Left cardiac atrium (tissue), 4 donors: ENCODE measurements at regions of chr12 and their contacts with region 1.

Region 1: GRCh38 chr12:119444456-119445044 is 110.0 kb downstream of the CCDC60 start:
- DNase-seq: peak; percentile 46
- ATAC-seq: peak in 1 of 2 donors; percentile 33

Region 2: DNA sequence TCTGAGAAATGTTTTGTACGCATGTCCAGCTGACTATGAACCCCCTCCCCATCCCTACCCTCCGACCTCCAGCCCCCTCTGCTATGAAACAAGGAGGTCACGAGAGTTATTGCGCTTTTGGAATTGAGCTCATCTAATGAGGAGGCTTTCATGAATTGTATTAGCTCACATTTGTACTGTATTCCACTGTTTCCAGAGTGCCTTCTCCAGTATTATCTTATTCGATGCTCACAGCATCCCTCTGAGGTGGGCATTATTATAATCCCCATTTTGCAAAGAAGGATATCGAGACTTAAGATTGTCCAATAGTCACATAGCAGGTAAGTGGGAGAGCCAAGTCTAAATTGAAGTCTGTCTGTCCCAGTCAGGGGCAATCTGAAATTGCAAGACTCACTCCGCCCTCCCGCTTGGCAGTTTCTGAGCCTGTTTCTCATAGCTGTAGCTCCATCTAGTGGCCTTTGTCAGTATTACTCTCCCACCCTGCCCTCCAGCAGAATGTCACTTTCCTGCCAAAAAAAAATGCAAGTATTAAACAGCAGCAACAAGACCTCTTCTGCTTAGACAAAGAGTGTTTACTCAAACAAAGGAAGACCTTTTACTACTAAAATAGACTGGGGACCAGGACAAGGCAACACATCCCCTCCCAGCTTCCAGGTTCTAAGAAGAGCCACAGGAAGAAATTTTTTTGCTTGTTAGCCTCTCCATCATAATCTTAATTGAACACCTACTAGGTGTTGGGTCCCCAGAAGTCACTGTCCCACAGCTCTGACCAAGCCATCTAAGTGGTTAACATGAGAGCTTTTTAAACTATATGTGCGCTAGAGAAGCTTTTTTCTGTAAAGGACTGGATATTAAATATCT is 100.4 kb after region 1 on chr12:
- intact Hi-C with region 1: loop called (anchors 1 to 5 kb)
- DNase-seq: peak; percentile 67
- ATAC-seq: peak; percentile 63 to 80

Region 3: GRCh38 chr12:119649202-119649808 is 204.8 kb after region 1 on chr12:
- intact Hi-C with region 1: loop called in 1 of 2 experiments (anchors 10 kb)
- DNase-seq: no peak
- ATAC-seq: no peak